Activated CD8-positive, alpha-beta T cell treated with anti-CD3 and anti-CD28 coated beads for 36 hours (primary cell): ENCODE measurements at regions of chr6 and their contacts with region 1.

Region 1: GRCh38 chr6:13711733-13712598 is at the start of gene RANBP9:
- DNase-seq: peak; percentile 89
- ATAC-seq: peak; percentile 77
- H3K4me3 Mint-ChIP-seq: peak within 1 kb of the TSS; percentile 100
- H3K27ac Mint-ChIP-seq: peak within 1 kb of the TSS; percentile 96
- H3K4me1 Mint-ChIP-seq: peaks cover 47% of the 10 kb centered on the region
- H3K27me3 Mint-ChIP-seq: no peaks in the 10 kb centered on the region
- CTCF ChIP-seq: no peak
- total RNA-seq, gene RANBP9: 53.3 to 56.2 TPM

Region 2: GRCh38 chr6:13614926-13615798 is 96.8 kb before region 1 on chr6 and contains the start of gene NOL7:
- CTCF ChIA-PET with region 1: interaction called, 16 read pairs
- POLR2A ChIA-PET with region 1: interaction called, 11 read pairs
- intact Hi-C with region 1: no loop called
- DNase-seq: peak; percentile 98
- ATAC-seq: peak; percentile 95
- H3K4me3 Mint-ChIP-seq: peak within 1 kb of the TSS; percentile 99
- H3K27ac Mint-ChIP-seq: peak within 1 kb of the TSS; percentile 96
- H3K4me1 Mint-ChIP-seq: peaks cover 36% of the 10 kb centered on the region
- H3K27me3 Mint-ChIP-seq: no peaks in the 10 kb centered on the region
- CTCF ChIP-seq: peak; percentile 88
- total RNA-seq, gene NOL7: 95.2 to 95.8 TPM

Region 3: DNA sequence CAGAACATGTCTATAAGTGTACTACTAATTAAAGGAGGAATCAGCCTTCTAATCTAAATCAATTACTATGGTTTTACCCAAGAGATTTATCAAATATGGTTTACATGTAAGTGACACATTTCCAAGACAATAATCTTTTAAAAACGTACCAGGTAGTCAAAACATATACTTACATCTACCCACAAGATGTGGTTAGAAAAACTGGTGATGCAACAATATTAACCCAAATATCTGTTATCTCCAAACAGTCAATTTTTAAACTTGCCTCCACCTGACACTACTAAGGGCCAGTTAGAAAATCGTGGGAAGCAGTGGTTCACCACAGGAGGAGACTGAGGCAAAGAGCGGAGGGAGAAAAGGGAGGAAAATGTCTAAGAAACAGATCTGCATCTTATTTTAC is 68.8 kb before region 1 on chr6:
- CTCF ChIA-PET with region 1: no interaction called
- POLR2A ChIA-PET with region 1: no interaction called
- intact Hi-C with region 1: no loop called
- DNase-seq: no peak
- ATAC-seq: no peak
- H3K4me3 Mint-ChIP-seq: no peak overlapping the region
- H3K27ac Mint-ChIP-seq: no peak overlapping the region
- H3K4me1 Mint-ChIP-seq: peaks cover 29% of the 10 kb centered on the region
- H3K27me3 Mint-ChIP-seq: no peaks in the 10 kb centered on the region
- CTCF ChIP-seq: no peak

Region 4: DNA sequence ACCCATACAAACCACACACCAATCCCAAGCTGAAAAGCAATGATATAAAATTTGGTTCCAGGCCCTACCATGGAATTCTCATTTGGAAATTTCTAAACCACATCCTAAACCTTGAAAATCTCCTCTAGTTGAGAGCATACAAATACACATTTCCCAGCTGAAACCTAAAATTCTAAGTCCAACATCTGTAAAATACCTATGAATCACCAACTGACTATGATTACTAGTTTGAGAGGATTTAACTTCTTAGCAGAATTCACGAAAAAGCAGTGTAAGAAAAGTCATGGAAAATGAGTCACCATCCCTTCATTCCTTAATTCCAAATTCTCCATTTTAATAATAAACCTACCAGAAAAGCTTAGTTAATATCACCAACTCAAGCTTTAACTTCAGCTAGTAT is 15.7 kb before region 1 on chr6:
- CTCF ChIA-PET with region 1: interaction called, 8 read pairs
- POLR2A ChIA-PET with region 1: interaction called, 11 read pairs
- intact Hi-C with region 1: no loop called
- DNase-seq: no peak
- ATAC-seq: no peak
- H3K4me3 Mint-ChIP-seq: no peak overlapping the region
- H3K27ac Mint-ChIP-seq: peak overlapping the region; percentile 37
- H3K4me1 Mint-ChIP-seq: peaks cover 70% of the 10 kb centered on the region
- H3K27me3 Mint-ChIP-seq: no peaks in the 10 kb centered on the region
- CTCF ChIP-seq: no peak